GM12878 (cell line): ENCODE measurements at regions of chr11 and their contacts with region 1.

Region 1: DNA sequence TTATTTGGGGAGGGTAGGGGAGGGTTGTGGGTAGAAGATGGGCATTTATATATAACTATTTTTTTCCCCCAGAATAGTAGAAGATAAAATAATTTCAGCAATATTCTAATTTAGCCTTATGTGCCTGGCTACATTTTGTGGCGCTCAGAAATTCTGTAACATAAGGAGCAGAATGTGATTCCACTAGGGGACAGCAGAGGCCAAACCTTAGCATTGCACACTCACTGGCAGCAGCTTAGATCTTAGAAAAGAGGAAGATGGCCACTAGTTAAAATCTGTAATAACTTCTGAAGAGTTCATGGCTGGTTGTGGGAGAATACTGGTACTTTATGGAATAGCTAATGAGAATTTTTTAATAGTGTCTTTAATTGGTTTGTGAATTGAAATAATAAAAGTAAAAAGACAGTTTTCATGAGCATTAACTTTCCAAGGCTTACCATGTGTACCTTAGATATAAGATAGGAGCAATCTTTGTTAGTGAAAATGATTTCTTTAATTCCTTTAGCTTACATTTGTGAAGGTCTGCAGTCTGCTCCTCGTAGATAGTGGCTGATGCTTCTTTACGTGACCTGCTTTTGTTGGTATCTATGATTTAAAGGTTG is 33.1 kb downstream of the DDX10 start:
- DNase-seq: peak; percentile 49
- ATAC-seq: peak; percentile 92
- H3K4me3 ChIP-seq: no peak overlapping the region
- H3K27ac ChIP-seq: no peak overlapping the region
- H3K4me1 ChIP-seq: 0 out of 2 replicates have a peak, but pooled peaks cover 3% of the 10 kb centered on the region
- H3K27me3 ChIP-seq: no peaks in the 10 kb centered on the region
- CTCF ChIP-seq: peak; percentile 89 to 98 (median 94)
- EP300 ChIP-seq: no peak
- POLR2A ChIP-seq: no peak
- RAD21 ChIP-seq: peak; percentile 100

Region 2: GRCh38 chr11:108551651-108552462 is 146.1 kb before region 1 on chr11:
- CTCF ChIA-PET with region 1: no interaction called
- POLR2A ChIA-PET with region 1: no interaction called
- RAD21 ChIA-PET with region 1: no interaction called
- SMC1A ChIA-PET with region 1: no interaction called
- in situ Hi-C with region 1: no loop called
- intact Hi-C with region 1: no loop called
- DNase-seq: no peak
- ATAC-seq: no peak
- H3K4me3 ChIP-seq: no peak overlapping the region
- H3K27ac ChIP-seq: no peak overlapping the region
- H3K4me1 ChIP-seq: no peaks in the 10 kb centered on the region
- H3K27me3 ChIP-seq: no peaks in the 10 kb centered on the region
- CTCF ChIP-seq: no peak
- EP300 ChIP-seq: no peak
- POLR2A ChIP-seq: no peak
- RAD21 ChIP-seq: no peak

Region 3: DNA sequence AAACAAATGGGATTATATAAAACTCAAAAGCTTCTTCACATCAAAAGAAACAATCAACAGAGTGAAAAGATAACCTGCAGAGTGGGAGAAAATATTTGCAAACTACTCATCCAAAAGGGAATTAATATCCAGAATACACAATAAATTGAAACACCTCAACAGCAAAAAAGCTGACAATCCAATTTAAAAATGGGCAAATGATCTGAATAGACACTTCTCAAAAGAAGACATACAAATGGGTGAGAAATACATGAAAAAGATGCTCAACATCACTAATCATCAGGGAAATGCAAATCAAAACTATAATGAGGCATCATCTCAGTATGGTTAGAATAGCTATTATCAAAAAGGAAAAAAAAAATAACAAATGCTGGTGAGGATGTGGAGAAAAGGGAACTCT is 117.9 kb before region 1 on chr11:
- CTCF ChIA-PET with region 1: no interaction called
- POLR2A ChIA-PET with region 1: no interaction called
- RAD21 ChIA-PET with region 1: no interaction called
- SMC1A ChIA-PET with region 1: no interaction called
- in situ Hi-C with region 1: no loop called
- intact Hi-C with region 1: no loop called
- DNase-seq: no peak
- ATAC-seq: no peak
- H3K4me3 ChIP-seq: no peak overlapping the region
- H3K27ac ChIP-seq: no peak overlapping the region
- H3K4me1 ChIP-seq: no peaks in the 10 kb centered on the region
- H3K27me3 ChIP-seq: no peaks in the 10 kb centered on the region
- CTCF ChIP-seq: no peak
- EP300 ChIP-seq: no peak
- POLR2A ChIP-seq: no peak
- RAD21 ChIP-seq: no peak

Region 4: DNA sequence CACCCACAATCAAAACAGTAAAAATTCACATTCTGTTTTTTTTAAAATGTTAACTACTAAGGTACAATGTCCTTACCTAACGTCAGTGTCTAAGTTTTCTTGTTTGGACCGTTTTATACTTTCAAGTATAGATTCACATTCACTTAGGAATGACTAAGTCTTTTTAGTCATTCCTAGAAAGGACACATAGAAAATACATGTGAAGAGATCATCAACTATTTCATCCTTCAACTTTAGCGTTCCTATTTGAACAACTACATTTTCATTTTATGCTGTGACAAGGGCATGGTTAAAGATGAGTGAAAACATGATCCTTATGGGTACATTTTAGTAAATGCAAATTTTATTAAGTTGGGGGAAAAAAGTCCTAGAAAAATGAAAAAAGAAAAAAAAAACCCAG is 29.7 kb after region 1 on chr11:
- CTCF ChIA-PET with region 1: interaction called, 173 read pairs
- POLR2A ChIA-PET with region 1: no interaction called
- RAD21 ChIA-PET with region 1: interaction called, 161 read pairs
- SMC1A ChIA-PET with region 1: interaction called, 136 read pairs
- in situ Hi-C with region 1: no loop called
- intact Hi-C with region 1: no loop called
- DNase-seq: no peak
- ATAC-seq: peak; percentile 67
- H3K4me3 ChIP-seq: peak overlapping the region; percentile 43
- H3K27ac ChIP-seq: peak overlapping the region; percentile 86
- H3K4me1 ChIP-seq: peaks cover 11% of the 10 kb centered on the region; the same call in 1 of the 2 replicates
- H3K27me3 ChIP-seq: no peaks in the 10 kb centered on the region
- CTCF ChIP-seq: no peak
- EP300 ChIP-seq: no peak
- POLR2A ChIP-seq: no peak
- RAD21 ChIP-seq: 0 out of 2 replicates have a peak, but pooled peaks have one; percentile 5

Region 5: DNA sequence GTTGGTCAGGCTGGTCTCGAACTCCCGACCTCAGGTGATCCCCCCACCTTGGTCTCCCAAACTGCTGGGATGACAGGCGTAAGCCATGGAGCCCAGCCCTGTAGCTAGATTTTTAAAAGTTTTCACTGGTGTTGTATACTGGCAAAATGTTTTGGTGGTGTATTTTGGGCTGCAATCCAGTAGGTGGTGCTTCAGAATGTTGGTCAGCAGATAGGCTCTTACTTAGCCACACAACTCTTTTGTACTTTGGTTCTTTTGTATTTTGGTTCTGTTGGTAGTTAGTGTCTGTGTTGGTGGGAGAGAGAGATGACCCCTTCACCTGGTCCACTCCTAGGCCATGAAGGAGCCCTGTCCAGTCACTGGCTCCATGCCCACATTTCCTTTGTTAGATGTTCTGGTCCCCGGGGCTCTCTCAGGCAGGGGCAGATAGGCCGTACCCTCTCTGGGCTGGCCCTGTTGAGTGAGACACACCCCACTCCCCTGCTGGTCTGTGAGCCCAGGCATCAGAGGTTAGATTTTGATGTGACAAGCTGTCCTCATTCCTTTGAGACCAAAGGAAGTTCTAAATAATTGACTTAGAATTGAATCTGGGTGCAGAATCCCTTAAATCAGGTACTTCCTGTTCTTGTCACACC is 90.7 kb after region 1 on chr11:
- CTCF ChIA-PET with region 1: interaction called, 11 read pairs
- POLR2A ChIA-PET with region 1: no interaction called
- RAD21 ChIA-PET with region 1: interaction called, 4 read pairs
- SMC1A ChIA-PET with region 1: interaction called, 7 read pairs
- in situ Hi-C with region 1: no loop called
- intact Hi-C with region 1: no loop called
- DNase-seq: no peak
- ATAC-seq: peak; percentile 84
- H3K4me3 ChIP-seq: no peak overlapping the region
- H3K27ac ChIP-seq: no peak overlapping the region
- H3K4me1 ChIP-seq: peaks cover 4% of the 10 kb centered on the region; the same call in 1 of the 2 replicates
- H3K27me3 ChIP-seq: no peaks in the 10 kb centered on the region
- CTCF ChIP-seq: peak; percentile 50 to 55 (median 51); a peak in 5 of 6 replicates
- EP300 ChIP-seq: no peak
- POLR2A ChIP-seq: no peak
- RAD21 ChIP-seq: peak; percentile 69

Region 6: DNA sequence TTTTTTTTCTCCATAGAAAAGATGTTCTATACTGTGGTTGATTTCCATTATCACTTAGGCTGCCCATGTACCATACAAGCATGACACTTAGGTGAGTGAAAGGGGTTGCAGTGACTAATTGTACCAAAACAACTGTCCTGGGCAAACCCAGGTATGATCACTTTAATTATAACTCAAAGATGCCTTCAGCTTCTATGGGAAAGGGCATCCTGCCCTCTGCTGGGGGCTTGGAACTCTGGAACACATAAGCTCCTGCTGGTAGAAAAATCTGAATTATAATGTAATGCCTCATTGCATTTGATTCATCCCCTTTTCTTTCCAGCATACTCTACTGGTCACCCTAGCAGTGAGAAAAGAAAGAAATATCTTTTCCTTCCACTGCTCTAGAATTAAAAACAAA is 173.2 kb after region 1 on chr11:
- CTCF ChIA-PET with region 1: interaction called, 50 read pairs
- POLR2A ChIA-PET with region 1: no interaction called
- RAD21 ChIA-PET with region 1: interaction called, 37 read pairs
- SMC1A ChIA-PET with region 1: interaction called, 20 read pairs
- in situ Hi-C with region 1: loop called (anchors 5 kb)
- intact Hi-C with region 1: loop called (anchors 1 kb)
- DNase-seq: no peak
- ATAC-seq: peak; percentile 58
- H3K4me3 ChIP-seq: no peak overlapping the region
- H3K27ac ChIP-seq: no peak overlapping the region
- H3K4me1 ChIP-seq: no peaks in the 10 kb centered on the region
- H3K27me3 ChIP-seq: no peaks in the 10 kb centered on the region
- CTCF ChIP-seq: peak; percentile 43 to 55 (median 48); a peak in 4 of 6 replicates
- EP300 ChIP-seq: no peak
- POLR2A ChIP-seq: no peak
- RAD21 ChIP-seq: peak; percentile 77

Region 7: GRCh38 chr11:109040303-109040702 is 342.3 kb after region 1 on chr11:
- CTCF ChIA-PET with region 1: no interaction called
- POLR2A ChIA-PET with region 1: no interaction called
- RAD21 ChIA-PET with region 1: interaction called, 3 read pairs
- SMC1A ChIA-PET with region 1: interaction called, 3 read pairs
- in situ Hi-C with region 1: no loop called
- intact Hi-C with region 1: loop called (anchors 10 kb)
- DNase-seq: no peak
- ATAC-seq: peak; percentile 55; the same call in 2 of the 3 replicates
- H3K4me3 ChIP-seq: no peak overlapping the region
- H3K27ac ChIP-seq: no peak overlapping the region
- H3K4me1 ChIP-seq: no peaks in the 10 kb centered on the region
- H3K27me3 ChIP-seq: no peaks in the 10 kb centered on the region; a peak in 2 of 4 replicates
- CTCF ChIP-seq: peak; percentile 8 to 30 (median 16); a peak in 3 of 6 replicates
- EP300 ChIP-seq: no peak
- POLR2A ChIP-seq: no peak
- RAD21 ChIP-seq: 0 out of 2 replicates have a peak, but pooled peaks have one; percentile 6

Region 8: GRCh38 chr11:109096270-109096669 is 398.3 kb after region 1 on chr11:
- CTCF ChIA-PET with region 1: no interaction called
- POLR2A ChIA-PET with region 1: no interaction called
- RAD21 ChIA-PET with region 1: no interaction called
- SMC1A ChIA-PET with region 1: no interaction called
- in situ Hi-C with region 1: no loop called
- intact Hi-C with region 1: no loop called
- DNase-seq: no peak
- ATAC-seq: no peak
- H3K4me3 ChIP-seq: no peak overlapping the region
- H3K27ac ChIP-seq: no peak overlapping the region
- H3K4me1 ChIP-seq: no peaks in the 10 kb centered on the region
- H3K27me3 ChIP-seq: no peaks in the 10 kb centered on the region
- CTCF ChIP-seq: no peak
- EP300 ChIP-seq: no peak
- POLR2A ChIP-seq: no peak
- RAD21 ChIP-seq: no peak

Region 9: DNA sequence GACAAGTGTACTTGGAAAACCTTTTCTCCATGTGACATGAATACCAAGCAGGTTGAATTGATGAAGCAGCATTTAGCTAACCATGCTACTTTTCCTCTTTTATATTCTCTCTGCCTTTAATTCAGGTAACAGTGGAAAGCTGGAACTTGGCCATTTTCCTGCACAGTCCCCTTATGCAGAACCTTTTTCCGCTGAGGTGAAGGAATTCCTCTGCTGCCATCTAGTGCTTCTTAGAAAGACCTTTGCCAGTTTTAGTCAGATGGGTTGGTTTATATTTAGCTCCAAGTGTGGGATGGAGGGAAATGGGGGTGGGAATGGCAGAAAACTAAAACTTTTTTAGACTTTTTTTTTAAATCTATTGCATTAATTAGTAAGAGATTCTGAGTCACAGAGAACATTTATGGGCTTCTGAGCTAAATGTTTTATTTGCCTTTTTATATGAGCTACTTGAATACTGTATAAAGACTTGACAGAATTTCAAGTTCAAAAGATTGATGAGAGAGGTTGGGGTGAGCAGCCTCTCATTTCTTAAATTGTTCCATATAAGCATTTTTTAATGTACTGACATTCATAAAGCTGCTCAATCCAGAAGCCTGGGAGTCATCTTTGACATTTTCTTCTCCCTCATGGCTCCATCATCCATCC is 1241.3 kb after region 1 on chr11:
- CTCF ChIA-PET with region 1: interaction called, 8 read pairs
- POLR2A ChIA-PET with region 1: no interaction called
- RAD21 ChIA-PET with region 1: interaction called, 8 read pairs
- SMC1A ChIA-PET with region 1: interaction called, 8 read pairs
- in situ Hi-C with region 1: no loop called
- intact Hi-C with region 1: loop called (anchors 5 kb)
- DNase-seq: no peak
- ATAC-seq: peak; percentile 82
- H3K4me3 ChIP-seq: no peak overlapping the region
- H3K27ac ChIP-seq: no peak overlapping the region
- H3K4me1 ChIP-seq: no peaks in the 10 kb centered on the region
- H3K27me3 ChIP-seq: no peaks in the 10 kb centered on the region; a peak in 1 of 4 replicates
- CTCF ChIP-seq: peak; percentile 49 to 85 (median 60)
- EP300 ChIP-seq: no peak
- POLR2A ChIP-seq: no peak
- RAD21 ChIP-seq: peak; percentile 97